ENCODE measurements at regions of chr10 and their contacts with region 1.

Region 1: GRCh38 chr10:5731559-5731958 is 46.9 kb downstream of the TASOR2 start:
- DNase-seq: no peak
- H3K4me3 Mint-ChIP-seq: peak overlapping the region; percentile 23
- H3K27ac Mint-ChIP-seq: peak overlapping the region; percentile 70
- H3K4me1 Mint-ChIP-seq: peaks cover 33% of the 10 kb centered on the region
- H3K27me3 Mint-ChIP-seq: no peaks in the 10 kb centered on the region

Region 2: GRCh38 chr10:5684318-5684970 is 47.1 kb before region 1 on chr10 and contains the start of gene TASOR2:
- intact Hi-C with region 1: loop called (anchors 2 kb)
- DNase-seq: peak; percentile 96
- H3K4me3 Mint-ChIP-seq: peak within 1 kb of the TSS; percentile 96
- H3K27ac Mint-ChIP-seq: peak within 1 kb of the TSS; percentile 97
- H3K4me1 Mint-ChIP-seq: peaks cover 51% of the 10 kb centered on the region
- H3K27me3 Mint-ChIP-seq: peaks cover 9% of the 10 kb centered on the region
- total RNA-seq, gene TASOR2: 60.1 and 68.7 TPM in 2 replicates